Vagina (tissue), 2 donors: ENCODE measurements at regions of chr4 and their contacts with region 1.

Region 1: DNA sequence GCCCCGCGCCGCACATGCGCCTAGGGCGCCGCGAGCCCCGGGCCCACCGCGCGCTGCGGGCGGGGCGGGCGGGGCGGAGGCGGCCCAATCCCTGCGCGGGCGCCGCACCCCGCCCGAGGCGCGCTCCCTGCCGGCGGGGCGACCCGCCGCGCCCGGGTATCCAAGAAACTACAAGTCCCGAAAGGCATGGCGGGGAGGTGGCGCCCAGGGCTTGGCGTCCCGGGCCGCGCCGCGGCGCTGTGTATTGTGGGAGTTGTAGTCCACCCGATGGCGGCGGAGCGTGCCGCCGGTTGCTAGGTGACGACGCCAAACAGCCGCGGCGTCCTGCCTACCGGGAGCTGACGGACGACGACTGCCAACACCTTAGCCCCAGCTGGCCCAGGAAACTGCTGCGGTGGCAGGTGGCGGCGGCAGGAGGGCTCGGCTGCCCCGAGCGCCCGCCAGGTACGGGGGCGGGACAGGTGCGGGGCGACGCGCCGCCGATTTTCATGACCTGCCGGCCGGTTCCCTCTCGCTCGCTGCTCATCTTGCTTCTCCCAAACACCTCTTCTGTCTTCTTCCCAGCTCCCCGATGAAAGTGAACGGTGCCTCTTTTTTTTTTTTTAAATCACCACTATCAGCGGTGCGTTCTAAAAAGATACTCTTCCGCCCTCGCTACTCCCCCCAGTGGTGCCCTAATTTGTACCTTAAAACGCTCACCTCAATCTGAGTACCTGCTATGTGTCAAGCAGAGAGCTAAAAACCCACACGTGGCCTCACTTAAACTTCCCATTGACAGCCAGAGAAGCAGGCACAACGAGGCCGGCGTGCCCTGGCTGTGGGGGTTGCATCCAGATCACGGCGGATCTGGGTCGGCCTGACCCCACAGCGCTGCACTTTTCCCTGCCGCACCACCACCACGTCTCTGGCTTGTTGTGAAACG is at the start of gene CFAP99:
- DNase-seq: peak in 1 of 2 donors; percentile 93
- H3K4me3 ChIP-seq: peak within 1 kb of the TSS; percentile 54 to 85
- H3K27ac ChIP-seq: peak within 1 kb of the TSS; percentile 44
- H3K4me1 ChIP-seq: peaks cover 41% of the 10 kb centered on the region
- H3K27me3 ChIP-seq: no peaks in the 10 kb centered on the region
- CTCF ChIP-seq: no peak
- POLR2A ChIP-seq: no peak
- total RNA-seq, gene CFAP99: not detected

Region 2: DNA sequence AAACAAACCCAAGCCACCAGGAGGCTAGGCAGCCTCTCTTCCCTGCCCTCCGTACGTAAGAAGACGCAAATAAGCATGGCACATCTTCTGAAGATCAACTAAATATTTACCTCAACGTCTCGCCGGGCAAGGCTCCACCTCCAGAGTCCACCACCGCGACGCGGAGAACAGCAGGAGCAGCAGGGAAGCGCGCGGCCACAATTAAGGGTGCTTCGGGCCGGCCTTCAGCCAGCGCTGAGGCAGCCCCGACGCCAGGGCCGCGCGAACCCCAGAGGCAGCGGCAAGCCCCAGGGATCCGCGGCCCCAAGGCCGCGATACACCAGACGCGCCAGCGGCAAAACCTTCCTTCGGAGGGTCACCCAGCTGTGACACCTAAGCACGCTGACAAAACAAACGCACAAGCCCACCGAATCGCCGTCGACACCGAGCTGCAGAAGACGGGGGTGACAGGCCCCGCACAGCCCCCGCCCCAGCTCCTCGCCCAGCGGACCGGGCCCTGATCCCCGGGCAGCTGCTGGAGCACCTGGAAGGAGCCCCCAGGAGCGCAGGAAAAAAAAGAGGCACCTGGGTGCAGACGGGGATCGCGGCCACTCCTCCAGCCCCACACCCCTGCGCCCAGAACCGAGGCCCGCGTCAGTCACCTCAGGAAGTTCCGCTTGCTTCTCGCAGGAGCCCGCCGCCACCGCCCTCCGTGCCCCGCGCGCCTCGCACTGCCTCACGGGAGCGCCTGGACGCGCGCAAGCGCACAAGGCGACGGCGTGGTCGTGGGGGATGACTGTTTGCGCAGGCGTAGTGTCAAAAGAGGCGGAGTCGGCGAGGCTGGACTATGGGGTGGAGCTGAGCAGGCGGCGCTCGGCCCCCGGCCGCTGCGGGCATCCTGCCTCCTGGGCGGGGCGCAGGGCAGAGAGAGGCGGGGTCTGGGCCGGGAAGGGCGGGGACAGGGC is 177.2 kb before region 1 on chr4 and contains the starts of genes HAUS3 and POLN:
- intact Hi-C with region 1: loop called (anchors 5 kb)
- DNase-seq: peak; percentile 95 to 99
- H3K4me3 ChIP-seq: peak within 1 kb of the TSS; percentile 84 to 90
- H3K27ac ChIP-seq: peak within 1 kb of the TSS; percentile 69
- H3K4me1 ChIP-seq: peaks cover 68% of the 10 kb centered on the region
- H3K27me3 ChIP-seq: no peaks in the 10 kb centered on the region
- CTCF ChIP-seq: no peak
- POLR2A ChIP-seq: peak in 1 of 2 donors; percentile 82
- total RNA-seq, gene HAUS3: 9.6 TPM
- total RNA-seq, gene POLN: 3.9 TPM

Region 3: GRCh38 chr4:2436301-2436700 is 17.4 kb after region 1 on chr4:
- intact Hi-C with region 1: no loop called
- DNase-seq: no peak
- H3K4me3 ChIP-seq: no peak overlapping the region
- H3K27ac ChIP-seq: no peak overlapping the region
- H3K4me1 ChIP-seq: no peaks in the 10 kb centered on the region
- H3K27me3 ChIP-seq: no peaks in the 10 kb centered on the region
- CTCF ChIP-seq: no peak
- POLR2A ChIP-seq: no peak

Region 4: DNA sequence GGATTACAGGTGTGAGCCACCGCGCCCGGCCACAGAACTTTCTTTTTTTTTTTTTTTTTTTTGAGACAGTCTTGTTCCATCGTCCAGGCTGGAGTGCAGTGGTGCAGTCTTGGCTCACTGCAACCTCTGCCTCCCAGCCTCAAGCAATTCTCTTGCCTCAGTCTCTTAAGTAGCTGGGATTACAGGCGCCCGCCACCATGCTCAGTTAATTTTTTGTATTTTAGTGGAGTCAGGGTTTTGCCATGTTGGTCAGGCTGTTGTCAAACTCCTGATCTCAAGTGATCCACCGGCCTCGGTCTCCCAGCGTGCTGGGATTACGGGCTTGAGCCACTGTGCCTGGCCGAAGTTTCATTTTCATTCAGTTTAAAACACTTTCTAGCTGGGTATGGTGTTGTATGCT is 133.9 kb after region 1 on chr4:
- intact Hi-C with region 1: no loop called
- DNase-seq: peak in 1 of 2 donors; percentile 7
- H3K4me3 ChIP-seq: no peak overlapping the region
- H3K27ac ChIP-seq: no peak overlapping the region
- H3K4me1 ChIP-seq: peaks cover 29% of the 10 kb centered on the region
- H3K27me3 ChIP-seq: no peaks in the 10 kb centered on the region
- CTCF ChIP-seq: no peak
- POLR2A ChIP-seq: no peak